ENCODE measurements at regions of chr13 and their contacts with region 1.

Region 1: GRCh38 chr13:75760131-75761021 is 124.2 kb downstream of the LMO7 start:
- DNase-seq: peak in 4 of 5 donors; percentile 14 to 37 (median 27)
- ATAC-seq: peak; percentile 75 to 89 (median 82)
- H3K4me3 ChIP-seq: peak overlapping the region; percentile 10 to 57 (median 44)
- H3K27ac ChIP-seq: peak overlapping the region; percentile 12 to 82 (median 64)
- H3K4me1 ChIP-seq: peaks cover 0 to 33% (median 11%) of the 10 kb centered on the region in 12 donors
- H3K27me3 ChIP-seq: no peaks in the 10 kb centered on the region
- CTCF ChIP-seq: peak in 6 of 12 donors; percentile 13 to 31 (median 19)
- POLR2A ChIP-seq: peak in 1 of 2 donors; percentile 40

Region 2: DNA sequence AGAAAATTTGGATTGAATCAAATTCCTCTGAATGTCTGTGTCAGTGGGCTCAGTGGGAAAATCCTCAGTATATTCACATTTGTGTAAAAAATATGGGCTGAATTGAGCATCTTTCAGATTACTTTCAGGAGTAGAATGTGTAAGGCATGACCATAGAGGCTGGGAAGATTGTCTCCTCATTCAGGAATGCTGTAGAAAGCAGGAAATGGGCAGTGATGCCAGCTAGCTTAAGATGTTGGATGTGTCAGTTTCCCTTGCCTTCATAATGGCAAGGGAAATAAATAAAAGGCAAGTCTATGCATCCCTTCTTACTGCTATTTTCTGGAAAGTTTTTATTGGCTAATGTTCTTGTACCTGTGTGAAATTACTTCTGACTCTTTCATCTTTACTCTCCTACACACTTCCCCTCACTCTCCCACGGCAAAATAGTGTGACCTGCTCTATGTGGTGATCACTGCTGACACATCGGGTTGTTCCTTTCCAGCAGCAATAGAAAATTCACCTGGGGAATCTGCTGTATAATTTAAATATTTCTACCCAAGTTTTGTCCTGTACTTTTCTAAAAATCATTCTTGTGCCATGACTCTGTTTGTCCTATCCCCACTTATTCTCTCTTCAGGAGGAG is 21.0 kb before region 1 on chr13:
- intact Hi-C with region 1: loop called in 1 of 10 experiments (anchors 2 kb)
- DNase-seq: no peak
- ATAC-seq: no peak
- H3K4me3 ChIP-seq: no peak overlapping the region
- H3K27ac ChIP-seq: no peak overlapping the region
- H3K4me1 ChIP-seq: peaks cover 0 to 8% (median 0%) of the 10 kb centered on the region in 12 donors
- H3K27me3 ChIP-seq: no peaks in the 10 kb centered on the region
- CTCF ChIP-seq: no peak
- POLR2A ChIP-seq: no peak

Region 3: GRCh38 chr13:75803164-75803611 is 42.8 kb after region 1 on chr13:
- intact Hi-C with region 1: loop called in 7 of 10 experiments (anchors 5 kb)
- DNase-seq: no peak
- ATAC-seq: peak; percentile 17 to 38 (median 26)
- H3K4me3 ChIP-seq: peak overlapping the region in 2 of 12 donors; percentile 11 to 59
- H3K27ac ChIP-seq: peak overlapping the region; percentile 49 to 96 (median 83)
- H3K4me1 ChIP-seq: peaks cover 0 to 32% (median 11%) of the 10 kb centered on the region in 12 donors
- H3K27me3 ChIP-seq: no peaks in the 10 kb centered on the region
- CTCF ChIP-seq: no peak
- POLR2A ChIP-seq: no peak

Region 4: DNA sequence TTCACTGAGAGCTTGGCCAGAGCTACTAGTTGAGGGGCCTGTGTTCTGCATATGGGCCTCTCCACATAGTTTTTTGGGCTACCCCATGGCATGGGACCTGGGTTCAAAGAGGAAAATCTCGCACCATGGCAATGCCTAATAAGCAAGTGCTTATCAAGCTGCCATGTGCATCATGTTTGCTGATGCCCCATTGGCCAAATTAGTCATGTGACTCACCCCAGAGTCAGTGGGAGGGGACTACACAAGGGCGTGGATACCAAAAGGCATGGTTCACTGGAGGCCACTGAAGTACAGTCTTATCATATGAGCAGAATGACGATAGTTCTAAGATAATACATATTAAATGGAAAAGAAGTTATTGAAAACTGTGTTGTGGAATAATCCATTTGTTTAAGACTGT is 90.5 kb after region 1 on chr13:
- intact Hi-C with region 1: loop called in 1 of 10 experiments (anchors 10 kb)
- DNase-seq: no peak
- ATAC-seq: peak in 3 of 4 donors; percentile 20 to 60 (median 37)
- H3K4me3 ChIP-seq: no peak overlapping the region
- H3K27ac ChIP-seq: no peak overlapping the region
- H3K4me1 ChIP-seq: peaks cover 0 to 18% (median 0%) of the 10 kb centered on the region in 12 donors
- H3K27me3 ChIP-seq: no peaks in the 10 kb centered on the region
- CTCF ChIP-seq: no peak
- POLR2A ChIP-seq: no peak